WTC11 (cell line): ENCODE measurements at regions of chr5 and their contacts with region 1.

Region 1: DNA sequence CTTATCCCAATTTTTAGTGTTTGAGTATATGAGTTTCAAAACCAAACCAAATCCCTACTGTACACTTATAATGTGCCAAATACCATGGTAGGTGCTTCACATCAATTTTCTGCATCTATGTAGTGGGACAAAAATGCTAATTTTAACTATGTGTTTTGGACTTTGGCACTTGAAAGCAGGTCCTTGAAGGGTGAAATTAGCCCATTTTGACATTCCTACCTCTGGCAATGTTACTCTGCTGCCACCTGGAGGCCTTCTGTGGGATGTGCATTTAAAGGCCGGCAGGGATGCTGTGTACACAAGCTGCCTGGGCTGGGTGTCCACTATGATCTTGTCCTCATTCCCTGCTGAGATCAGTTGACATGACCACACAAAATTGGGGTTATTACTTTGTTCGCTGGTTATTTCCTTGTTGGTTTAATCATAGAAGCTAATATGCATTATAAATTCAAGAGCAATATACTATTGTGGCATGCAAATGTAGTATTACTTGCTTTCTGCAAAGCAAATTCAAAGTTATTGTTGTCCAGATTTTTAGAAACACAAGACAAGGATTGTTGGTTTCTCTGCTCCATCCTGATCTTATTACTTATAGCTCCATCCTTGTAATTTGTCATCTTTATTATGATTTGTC is 166.8 kb downstream of the ARHGEF28 start:
- DNase-seq: peak; percentile 83
- ATAC-seq: peak; percentile 90
- H3K4me3 Mint-ChIP-seq: no peak overlapping the region
- H3K27ac Mint-ChIP-seq: no peak overlapping the region
- H3K4me1 Mint-ChIP-seq: peaks cover 16% of the 10 kb centered on the region
- H3K27me3 Mint-ChIP-seq: no peaks in the 10 kb centered on the region
- CTCF ChIP-seq: peak; percentile 81

Region 2: GRCh38 chr5:73812962-73813588 is 20.3 kb after region 1 on chr5:
- CTCF ChIA-PET with region 1: interaction called, 11 read pairs
- POLR2A ChIA-PET with region 1: no interaction called
- DNase-seq: no peak
- ATAC-seq: 0 out of 2 replicates have a peak, but pooled peaks have one; percentile 26
- H3K4me3 Mint-ChIP-seq: no peak overlapping the region
- H3K27ac Mint-ChIP-seq: no peak overlapping the region
- H3K4me1 Mint-ChIP-seq: peaks cover 23% of the 10 kb centered on the region
- H3K27me3 Mint-ChIP-seq: no peaks in the 10 kb centered on the region
- CTCF ChIP-seq: no peak